Adrenal gland (tissue), 19 donors: ENCODE measurements at regions of chr1 and their contacts with region 1.

Region 1: GRCh38 chr1:162612606-162613400 is 19.5 kb upstream of the DDR2 start:
- DNase-seq: peak in 6 of 7 donors; percentile 73 to 87 (median 82)
- H3K4me3 ChIP-seq: no peak overlapping the region
- H3K27ac ChIP-seq: peak overlapping the region; percentile 73 to 89 (median 80)
- H3K4me1 ChIP-seq: peaks cover 17 to 23% of the 10 kb centered on the region in 2 donors
- H3K27me3 ChIP-seq: no peaks in the 10 kb centered on the region
- CTCF ChIP-seq: no peak
- POLR2A ChIP-seq: no peak

Region 2: DNA sequence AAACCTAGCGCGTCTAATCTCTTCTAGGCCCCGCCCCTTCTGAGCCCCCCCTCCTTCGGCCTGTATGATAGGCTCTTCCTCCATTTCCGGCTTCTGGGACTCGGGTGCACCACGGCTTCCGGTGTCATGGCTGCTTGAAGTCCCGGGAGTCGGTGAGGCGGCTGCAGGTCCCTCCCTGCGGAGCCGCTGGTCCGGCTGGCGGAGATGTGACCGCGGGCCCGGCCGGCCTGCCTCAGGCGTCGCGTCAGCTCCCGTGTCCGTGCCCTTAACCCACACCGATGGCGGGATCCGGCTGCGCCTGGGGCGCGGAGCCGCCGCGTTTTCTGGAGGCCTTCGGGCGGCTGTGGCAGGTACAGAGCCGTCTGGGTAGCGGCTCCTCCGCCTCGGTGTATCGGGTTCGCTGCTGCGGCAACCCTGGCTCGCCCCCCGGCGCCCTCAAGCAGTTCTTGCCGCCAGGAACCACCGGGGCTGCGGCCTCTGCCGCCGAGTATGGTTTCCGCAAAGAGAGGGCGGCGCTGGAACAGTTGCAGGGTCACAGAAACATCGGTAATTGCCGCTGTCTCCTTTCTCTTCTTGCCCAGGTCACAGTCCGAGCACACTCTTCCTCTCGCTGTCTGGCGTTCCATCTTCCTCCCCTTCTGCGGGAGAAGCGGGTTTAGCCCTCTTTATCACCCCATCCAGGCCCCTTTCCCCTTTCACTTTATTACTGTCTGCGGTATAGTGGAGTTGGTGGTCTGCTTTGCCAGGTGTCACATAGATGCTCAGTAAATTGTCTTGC is 114.9 kb before region 1 on chr1 and contains the start of gene UHMK1:
- intact Hi-C with region 1: loop called in 1 of 2 experiments (anchors 10 kb)
- DNase-seq: peak; percentile 90 to 97 (median 94)
- H3K4me3 ChIP-seq: peak within 1 kb of the TSS; percentile 61 to 94 (median 71)
- H3K27ac ChIP-seq: peak within 1 kb of the TSS; percentile 88 to 96 (median 90)
- H3K4me1 ChIP-seq: peaks cover 10 to 31% of the 10 kb centered on the region in 2 donors
- H3K27me3 ChIP-seq: no peaks in the 10 kb centered on the region
- CTCF ChIP-seq: no peak
- POLR2A ChIP-seq: peak; percentile 40 to 74
- total RNA-seq, gene UHMK1: 46.0 to 81.6 (median 58.8) TPM

Region 3: GRCh38 chr1:162663589-162664106 is 50.8 kb after region 1 on chr1:
- intact Hi-C with region 1: no loop called
- DNase-seq: peak in 4 of 7 donors; percentile 53 to 68 (median 60)
- H3K4me3 ChIP-seq: no peak overlapping the region
- H3K27ac ChIP-seq: peak overlapping the region; percentile 18 to 61 (median 48)
- H3K4me1 ChIP-seq: peaks cover 25 to 33% of the 10 kb centered on the region in 2 donors
- H3K27me3 ChIP-seq: no peaks in the 10 kb centered on the region
- CTCF ChIP-seq: no peak
- POLR2A ChIP-seq: no peak

Region 4: DNA sequence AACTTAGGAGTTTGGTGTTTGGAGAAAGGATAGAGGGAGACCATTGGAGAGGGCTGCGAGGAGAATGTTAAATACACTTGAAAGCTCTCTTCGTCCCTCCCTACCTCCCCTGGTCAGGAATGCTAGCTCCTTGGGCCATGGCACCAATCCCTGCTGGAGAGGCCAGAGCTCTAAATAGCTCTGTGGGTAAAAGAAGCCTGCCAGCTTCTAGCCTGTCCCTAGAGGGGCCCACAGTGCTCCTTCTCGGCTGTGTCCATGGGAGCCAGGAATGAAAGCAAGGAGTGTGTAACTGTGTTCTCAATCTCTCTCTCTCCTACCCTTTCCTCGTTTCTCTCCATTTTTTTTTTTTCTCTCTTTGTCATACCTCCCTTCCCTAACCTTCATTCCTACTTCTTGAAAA is 248.3 kb after region 1 on chr1 and contains the start of gene CCDC190:
- intact Hi-C with region 1: no loop called
- DNase-seq: no peak
- H3K4me3 ChIP-seq: no peak within 1 kb of the TSS
- H3K27ac ChIP-seq: no peak within 1 kb of the TSS
- H3K4me1 ChIP-seq: no peaks in the 10 kb centered on the region
- H3K27me3 ChIP-seq: no peaks in the 10 kb centered on the region
- CTCF ChIP-seq: no peak
- POLR2A ChIP-seq: no peak
- total RNA-seq, gene CCDC190: not detected